Breast epithelium (tissue), 4 donors: ENCODE measurements at regions of chr9 and their contacts with region 1.

Region 1: GRCh38 chr9:114532561-114533237 is 27.4 kb upstream of the WHRN start:
- DNase-seq: no peak
- H3K4me3 ChIP-seq: peak overlapping the region in 2 of 3 donors; percentile 21 to 52
- H3K27ac ChIP-seq: no peak overlapping the region
- H3K4me1 ChIP-seq: no peaks in the 10 kb centered on the region
- H3K27me3 ChIP-seq: no peaks in the 10 kb centered on the region
- CTCF ChIP-seq: no peak
- POLR2A ChIP-seq: no peak

Region 2: DNA sequence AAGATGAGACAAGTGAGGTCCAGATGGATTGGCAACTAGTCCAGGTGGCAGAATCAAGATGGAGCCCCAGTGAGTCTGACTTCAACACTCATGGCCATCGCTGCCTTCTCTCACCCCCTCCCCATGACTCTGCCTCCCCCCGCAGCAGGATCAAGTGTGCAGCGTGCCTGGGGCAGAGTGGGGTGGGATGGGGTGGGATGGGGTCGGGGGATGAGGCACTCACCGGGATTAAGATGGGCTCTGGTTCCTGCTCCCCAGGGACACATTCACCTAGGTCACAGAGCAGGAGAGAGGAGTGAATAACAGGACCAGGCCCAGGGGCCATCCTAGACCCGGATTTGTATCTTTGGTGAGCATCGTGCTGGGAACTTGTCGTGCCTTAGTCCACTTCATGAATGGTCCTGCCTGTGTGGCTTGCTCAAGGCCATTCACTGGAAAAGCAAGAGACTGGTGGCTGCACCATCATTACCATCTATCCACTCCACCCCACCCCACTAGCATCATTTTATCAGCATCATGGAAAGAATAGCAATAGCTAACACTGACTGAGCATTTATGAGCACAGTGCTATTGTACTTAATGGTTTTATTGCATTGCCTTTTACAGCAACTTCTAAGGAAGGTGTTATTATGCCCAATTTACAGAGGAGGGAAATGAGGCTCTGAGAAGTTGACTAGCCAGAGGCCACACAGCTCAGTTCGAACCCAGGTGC is 463.1 kb before region 1 on chr9:
- intact Hi-C with region 1: loop called (anchors 5 kb)
- DNase-seq: no peak
- H3K4me3 ChIP-seq: no peak overlapping the region
- H3K27ac ChIP-seq: no peak overlapping the region
- H3K4me1 ChIP-seq: peaks cover 0 to 8% of the 10 kb centered on the region in 2 donors
- H3K27me3 ChIP-seq: no peaks in the 10 kb centered on the region
- CTCF ChIP-seq: no peak
- POLR2A ChIP-seq: no peak